A549 (cell line): ENCODE measurements at regions of chr2 and their contacts with region 1.

Region 1: DNA sequence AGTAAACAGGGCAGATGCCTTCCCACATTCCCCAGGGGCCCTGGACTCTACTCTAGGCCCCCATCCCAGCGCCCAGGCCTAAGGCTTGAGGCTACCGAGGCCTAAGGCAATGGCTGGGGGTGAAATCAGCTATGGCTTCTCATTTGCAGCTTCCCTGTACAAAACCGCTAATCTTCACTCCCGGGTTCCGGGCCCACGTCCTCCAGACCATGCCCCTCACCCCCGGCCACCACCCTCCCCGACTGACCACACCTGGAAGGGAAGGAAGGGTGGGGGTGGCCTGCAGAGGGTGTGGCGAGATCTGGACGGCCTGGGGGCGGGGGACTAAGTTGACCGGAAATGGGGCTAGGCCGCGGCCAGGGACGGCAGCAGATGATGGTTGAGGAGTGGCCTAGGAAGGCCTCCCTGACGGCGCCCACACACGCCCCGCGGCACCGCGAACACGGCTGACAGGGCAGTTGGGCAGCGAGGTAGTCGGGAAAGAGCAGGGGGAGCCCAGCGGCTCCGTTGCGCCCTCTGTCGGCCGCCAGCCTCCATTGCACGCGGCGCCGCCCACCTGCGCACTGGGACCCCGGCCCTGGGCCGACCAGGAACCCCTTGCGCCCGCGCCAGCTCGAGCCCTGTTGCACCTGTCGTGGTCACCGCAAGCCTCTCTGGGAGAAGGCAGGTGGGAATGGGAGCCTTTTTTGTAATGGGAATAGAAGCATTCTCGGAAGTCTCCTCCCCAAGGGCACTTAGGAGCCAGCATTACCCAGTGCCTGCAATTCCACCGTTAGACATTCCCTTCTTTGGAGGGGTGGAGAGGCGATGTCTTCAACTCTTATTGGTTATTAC is 117.1 kb upstream of the STPG4 start:
- DNase-seq: peak; percentile 86 to 89
- ATAC-seq: peak; percentile 52 to 80
- H3K4me3 ChIP-seq: peak overlapping the region; percentile 41
- H3K27ac ChIP-seq: peak overlapping the region; percentile 85 to 95
- H3K4me1 ChIP-seq: peaks cover 53% of the 10 kb centered on the region
- CTCF ChIP-seq: peak; percentile 99
- EP300 ChIP-seq: 0 out of 5 replicates have a peak, but pooled peaks of 1 of the 2 experiments have one; percentile 25
- POLR2A ChIP-seq: peak; percentile 16; the same call in 1 of the 2 replicates
- RAD21 ChIP-seq: peak; percentile 87 to 99

Region 2: DNA sequence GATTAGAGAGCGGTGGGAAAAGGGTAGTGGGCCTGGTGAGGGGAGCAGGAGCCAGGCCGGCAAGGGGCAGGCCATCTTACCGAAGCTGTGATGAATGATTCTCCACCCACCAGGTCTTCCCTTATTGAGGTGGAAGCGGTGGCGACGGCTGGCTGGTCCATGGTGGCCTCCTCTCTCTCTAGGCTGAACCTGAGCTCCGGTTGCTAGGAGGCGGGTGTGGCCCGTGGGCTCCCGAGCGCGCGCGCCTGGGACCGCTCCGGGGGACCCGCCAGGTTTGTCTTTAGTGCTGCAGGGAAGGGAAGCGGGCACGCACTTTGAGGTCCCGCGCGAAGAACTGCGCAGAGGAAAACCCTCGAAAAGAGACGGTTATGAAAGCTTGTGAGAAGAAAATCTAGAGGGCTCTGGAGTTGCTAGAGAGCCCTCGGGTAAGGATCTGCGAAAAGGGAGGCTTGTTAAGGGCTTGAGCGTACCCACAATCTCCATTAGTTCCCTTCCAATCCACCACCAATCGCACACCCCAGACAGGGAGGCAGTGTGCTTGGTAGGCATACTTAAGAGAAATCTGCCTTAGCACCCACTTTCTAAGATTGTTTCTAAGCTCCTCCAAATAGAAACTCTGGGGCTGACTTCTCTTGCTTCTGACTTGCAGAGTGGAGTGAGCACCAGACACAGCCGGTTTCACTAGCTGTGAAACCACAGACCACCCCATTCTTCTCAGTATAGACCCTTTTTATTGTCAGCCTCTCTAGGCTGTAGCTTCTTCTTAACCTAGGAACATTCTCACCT is 117.0 kb before region 1 on chr2 and contains the start of gene STPG4:
- CTCF ChIA-PET with region 1: interaction called, 11 read pairs
- POLR2A ChIA-PET with region 1: no interaction called
- DNase-seq: no peak
- ATAC-seq: peak; percentile 28 to 52; a peak in 5 of 6 replicates
- H3K4me3 ChIP-seq: no peak within 1 kb of the TSS
- H3K27ac ChIP-seq: peak within 1 kb of the TSS in 1 of 2 experiments; percentile 24; a peak in 2 of 6 replicates
- H3K4me1 ChIP-seq: peaks cover 12% of the 10 kb centered on the region; the same call in 2 of the 3 replicates
- CTCF ChIP-seq: no peak
- EP300 ChIP-seq: no peak
- POLR2A ChIP-seq: no peak
- RAD21 ChIP-seq: no peak
- polyA plus RNA-seq, gene STPG4: 0.09 and 0.13 TPM in 2 replicates

Region 3: GRCh38 chr2:47189635-47190034 is 82.6 kb before region 1 on chr2:
- CTCF ChIA-PET with region 1: interaction called, 12 read pairs
- POLR2A ChIA-PET with region 1: no interaction called
- DNase-seq: peak in 1 of 2 experiments; percentile 62
- ATAC-seq: no peak
- H3K4me3 ChIP-seq: no peak overlapping the region
- H3K27ac ChIP-seq: peak overlapping the region; percentile 89 to 94
- H3K4me1 ChIP-seq: peaks cover 66% of the 10 kb centered on the region
- CTCF ChIP-seq: no peak
- EP300 ChIP-seq: 0 out of 5 replicates have a peak, but pooled peaks of 1 of the 2 experiments have one; percentile 17
- POLR2A ChIP-seq: no peak
- RAD21 ChIP-seq: no peak; a peak in 2 of 5 replicates

Region 4: GRCh38 chr2:47288864-47289263 is 16.6 kb after region 1 on chr2:
- CTCF ChIA-PET with region 1: interaction called, 47 read pairs
- POLR2A ChIA-PET with region 1: no interaction called
- DNase-seq: peak in 1 of 2 experiments; percentile 63
- ATAC-seq: peak; percentile 48 to 84
- H3K4me3 ChIP-seq: no peak overlapping the region
- H3K27ac ChIP-seq: peak overlapping the region; percentile 78 to 84
- H3K4me1 ChIP-seq: peaks cover 54% of the 10 kb centered on the region
- CTCF ChIP-seq: no peak
- EP300 ChIP-seq: peak; percentile 53 to 60; a peak in 2 of 5 replicates
- POLR2A ChIP-seq: no peak
- RAD21 ChIP-seq: no peak